Dorsolateral prefrontal cortex (tissue), 120 donors: ENCODE measurements at regions of chrX and their contacts with region 1.

Region 1: GRCh38 chrX:154515878-154516655 is at the start of gene FAM3A:
- DNase-seq: peak; percentile 85 to 97 (median 94)
- H3K4me3 ChIP-seq: peak within 1 kb of the TSS; percentile 38 to 83 (median 69)
- H3K27ac ChIP-seq: peak within 1 kb of the TSS; percentile 49 to 97 (median 92)
- H3K27me3 ChIP-seq: peaks cover 0 to 65% (median 11%) of the 10 kb centered on the region in 45 donors
- CTCF ChIP-seq: peak in 3 of 56 donors; percentile 8 to 27 (median 24)
- total RNA-seq, gene FAM3A: 33.9 to 82.8 (median 51.1) TPM

Region 2: GRCh38 chrX:154409222-154409871 is 106.7 kb before region 1 on chrX and contains the start of gene DNASE1L1:
- intact Hi-C with region 1: loop called in 1 of 2 experiments (anchors 10 kb)
- DNase-seq: peak in 2 of 10 donors; percentile 22 to 52
- H3K4me3 ChIP-seq: peak within 1 kb of the TSS in 34 of 59 donors; percentile 1 to 53 (median 28)
- H3K27ac ChIP-seq: peak within 1 kb of the TSS in 25 of 59 donors; percentile 3 to 67 (median 31)
- H3K27me3 ChIP-seq: peaks cover 0 to 67% (median 15%) of the 10 kb centered on the region in 45 donors
- CTCF ChIP-seq: no peak
- total RNA-seq, gene DNASE1L1: 8.0 to 29.0 (median 17.4) TPM

Region 3: DNA sequence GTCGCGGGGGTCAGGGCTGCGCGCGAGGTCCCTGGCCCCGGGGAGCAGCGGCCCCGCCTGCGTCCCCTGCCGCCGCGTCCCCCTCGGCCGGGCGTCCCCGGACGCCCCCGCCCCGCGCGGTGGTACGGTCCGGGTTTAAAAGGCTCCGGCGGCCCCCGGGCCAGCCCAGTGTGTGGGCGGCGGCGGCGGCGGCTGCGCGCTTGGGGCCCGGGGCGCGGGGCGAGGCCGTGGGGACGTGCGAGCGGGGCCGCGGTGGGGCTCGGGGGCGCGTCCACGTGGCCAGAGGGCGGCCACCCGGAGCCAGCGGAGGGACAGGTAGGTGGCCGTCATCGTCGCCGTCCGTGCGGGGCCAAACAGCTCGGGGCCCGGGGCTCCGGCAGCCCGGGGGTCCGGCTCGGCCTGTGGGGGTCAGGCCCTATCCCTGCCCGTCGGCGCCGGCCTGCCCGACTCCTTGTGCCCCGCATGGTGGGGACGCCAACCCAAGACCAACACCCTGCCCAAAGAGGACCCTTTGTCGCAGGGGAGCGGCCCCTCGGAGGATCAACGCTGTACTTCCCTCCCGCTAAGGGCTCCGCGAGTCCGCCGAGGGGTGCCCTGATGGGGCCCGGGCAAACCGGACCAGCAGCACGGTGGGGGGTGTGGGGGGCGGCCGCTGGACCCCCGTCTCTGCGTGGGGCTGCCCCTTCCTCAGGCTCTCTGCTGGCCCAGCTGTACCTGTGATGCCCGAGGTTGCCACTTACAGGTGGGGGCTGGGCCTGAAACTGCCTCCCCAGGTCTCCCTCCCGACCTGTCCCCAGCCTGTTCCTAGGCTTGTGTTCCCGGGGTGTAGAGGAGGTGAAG is 57.7 kb before region 1 on chrX and contains the start of gene PLXNA3:
- intact Hi-C with region 1: no loop called
- DNase-seq: peak in 2 of 10 donors; percentile 38 to 67
- H3K4me3 ChIP-seq: peak within 1 kb of the TSS; percentile 32 to 76 (median 63)
- H3K27ac ChIP-seq: peak within 1 kb of the TSS in 41 of 59 donors; percentile 14 to 79 (median 63)
- H3K27me3 ChIP-seq: peaks cover 0 to 27% (median 0%) of the 10 kb centered on the region in 45 donors
- CTCF ChIP-seq: no peak
- total RNA-seq, gene PLXNA3: 23.8 to 78.3 (median 46.0) TPM

Region 4: GRCh38 chrX:154478728-154479622 is 37.1 kb before region 1 on chrX and contains the start of gene LAGE3:
- intact Hi-C with region 1: loop called in 1 of 2 experiments (anchors 5 kb)
- DNase-seq: peak; percentile 83 to 96 (median 91)
- H3K4me3 ChIP-seq: peak within 1 kb of the TSS; percentile 37 to 70 (median 58)
- H3K27ac ChIP-seq: peak within 1 kb of the TSS; percentile 18 to 93 (median 86)
- H3K27me3 ChIP-seq: peaks cover 0 to 69% (median 5%) of the 10 kb centered on the region in 45 donors
- CTCF ChIP-seq: peak in 5 of 56 donors; percentile 7 to 14 (median 11)
- total RNA-seq, gene LAGE3: 21.6 to 55.2 (median 36.1) TPM

Region 5: GRCh38 chrX:154486396-154487207 is 29.5 kb before region 1 on chrX and contains the start of gene UBL4A:
- intact Hi-C with region 1: loop called in 1 of 2 experiments (anchors 2 kb)
- DNase-seq: peak in 5 of 10 donors; percentile 54 to 72 (median 66)
- H3K4me3 ChIP-seq: peak within 1 kb of the TSS; percentile 42 to 80 (median 62)
- H3K27ac ChIP-seq: peak within 1 kb of the TSS; percentile 38 to 93 (median 85)
- H3K27me3 ChIP-seq: peaks cover 0 to 49% (median 7%) of the 10 kb centered on the region in 45 donors
- CTCF ChIP-seq: no peak
- total RNA-seq, gene UBL4A: 30.3 to 72.2 (median 51.7) TPM